ENCODE measurements at regions of chr2 and their contacts with region 1.

Region 1: GRCh38 chr2:46601328-46601963 is 122.1 kb downstream of the TMEM247 start:
- DNase-seq: no peak
- ATAC-seq: peak in 2 of 4 donors; percentile 17 to 49
- H3K4me3 ChIP-seq: no peak overlapping the region
- H3K27ac ChIP-seq: no peak overlapping the region
- H3K4me1 ChIP-seq: peaks cover 5% of the 10 kb centered on the region
- H3K27me3 ChIP-seq: no peaks in the 10 kb centered on the region
- CTCF ChIP-seq: peak; percentile 50

Region 2: DNA sequence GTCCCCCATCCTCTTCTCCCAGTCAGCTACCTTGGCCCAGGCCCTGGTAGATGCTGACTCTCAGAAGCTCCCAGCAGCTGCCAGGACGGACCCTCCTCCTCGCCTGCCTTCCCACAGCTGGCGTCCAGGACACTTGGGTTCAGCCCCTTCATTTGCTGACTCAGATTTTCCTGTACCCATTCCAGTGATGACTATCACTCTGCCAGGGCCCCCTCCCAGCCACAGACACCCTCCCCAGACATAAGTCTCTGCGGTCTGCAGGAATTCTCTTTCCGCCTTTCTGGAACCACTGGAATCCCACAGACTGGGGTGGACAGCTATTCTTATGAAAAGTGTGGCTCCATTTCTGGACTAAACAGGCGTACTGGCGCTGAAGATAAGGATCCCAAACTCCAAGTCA is 564.5 kb before region 1 on chr2:
- intact Hi-C with region 1: no loop called
- DNase-seq: no peak
- ATAC-seq: no peak
- H3K4me3 ChIP-seq: no peak overlapping the region
- H3K27ac ChIP-seq: no peak overlapping the region
- H3K4me1 ChIP-seq: peaks cover 22% of the 10 kb centered on the region
- H3K27me3 ChIP-seq: no peaks in the 10 kb centered on the region
- CTCF ChIP-seq: no peak

Region 3: GRCh38 chr2:46564811-46565241 is 36.6 kb before region 1 on chr2:
- intact Hi-C with region 1: loop called in 1 of 2 experiments (anchors 5 kb)
- DNase-seq: no peak
- ATAC-seq: peak in 2 of 4 donors; percentile 5 to 7
- H3K4me3 ChIP-seq: no peak overlapping the region
- H3K27ac ChIP-seq: peak overlapping the region; percentile 27
- H3K4me1 ChIP-seq: peaks cover 96% of the 10 kb centered on the region
- H3K27me3 ChIP-seq: no peaks in the 10 kb centered on the region
- CTCF ChIP-seq: no peak

Region 4: DNA sequence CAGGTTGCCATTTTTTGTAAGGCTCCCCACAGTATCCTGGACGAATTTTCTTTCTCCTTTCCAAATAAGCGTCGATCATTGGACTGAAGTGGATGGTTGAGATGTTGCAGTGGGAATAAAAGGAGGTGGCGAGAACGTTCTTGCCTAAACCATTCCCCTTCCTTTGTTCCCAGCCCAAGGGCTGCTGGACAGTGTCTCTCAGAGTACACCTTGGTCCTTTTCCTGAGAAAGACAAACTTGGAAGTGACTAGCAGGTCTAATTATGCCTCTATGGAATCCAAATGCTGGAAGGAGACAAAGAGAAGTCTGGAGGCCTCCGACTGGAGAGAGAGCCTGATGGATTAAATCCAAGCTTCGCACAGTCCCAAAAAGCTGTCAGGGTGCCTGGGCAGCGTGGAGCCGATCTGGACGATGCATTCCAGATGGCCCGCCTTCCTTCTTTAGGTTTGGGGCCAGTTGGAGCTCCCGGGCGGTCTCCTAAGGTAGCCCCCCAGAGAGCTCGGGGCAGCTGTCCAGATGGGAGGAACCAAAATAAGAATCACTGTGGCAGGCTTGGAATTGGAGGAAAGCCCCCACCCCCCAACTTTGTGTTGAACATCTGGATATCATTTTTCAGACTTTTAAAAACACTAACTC is 64.7 kb after region 1 on chr2:
- intact Hi-C with region 1: no loop called
- DNase-seq: peak; percentile 70 to 78
- ATAC-seq: peak in 3 of 4 donors; percentile 13 to 50 (median 27)
- H3K4me3 ChIP-seq: no peak overlapping the region
- H3K27ac ChIP-seq: no peak overlapping the region
- H3K4me1 ChIP-seq: peaks cover 17% of the 10 kb centered on the region
- H3K27me3 ChIP-seq: no peaks in the 10 kb centered on the region
- CTCF ChIP-seq: no peak

Measured in psoas muscle (tissue), 8 donors.